ENCODE measurements at regions of chr5 and their contacts with region 1.

Region 1: GRCh38 chr5:135887351-135887864 is 8.2 kb downstream of the IL9 start:
- DNase-seq: peak; percentile 77
- H3K4me3 ChIP-seq: no peak overlapping the region
- H3K27ac ChIP-seq: no peak overlapping the region
- H3K4me1 ChIP-seq: no peaks in the 10 kb centered on the region
- H3K27me3 ChIP-seq: peaks cover 18% of the 10 kb centered on the region
- CTCF ChIP-seq: peak; percentile 87

Region 2: GRCh38 chr5:135448791-135449507 is 438.5 kb before region 1 on chr5:
- CTCF ChIA-PET with region 1: no interaction called
- POLR2A ChIA-PET with region 1: no interaction called
- intact Hi-C with region 1: no loop called
- DNase-seq: no peak
- H3K4me3 ChIP-seq: no peak overlapping the region
- H3K27ac ChIP-seq: no peak overlapping the region
- H3K4me1 ChIP-seq: no peaks in the 10 kb centered on the region
- H3K27me3 ChIP-seq: peaks cover 25% of the 10 kb centered on the region
- CTCF ChIP-seq: no peak

Region 3: GRCh38 chr5:136062366-136063274 is 175.2 kb after region 1 on chr5:
- CTCF ChIA-PET with region 1: no interaction called
- POLR2A ChIA-PET with region 1: no interaction called
- intact Hi-C with region 1: loop called (anchors 1 kb)
- DNase-seq: peak; percentile 63
- H3K4me3 ChIP-seq: no peak overlapping the region
- H3K27ac ChIP-seq: no peak overlapping the region
- H3K4me1 ChIP-seq: no peaks in the 10 kb centered on the region
- H3K27me3 ChIP-seq: no peaks in the 10 kb centered on the region
- CTCF ChIP-seq: peak; percentile 59

Region 4: GRCh38 chr5:136080483-136081216 is 193.2 kb after region 1 on chr5:
- CTCF ChIA-PET with region 1: no interaction called
- POLR2A ChIA-PET with region 1: no interaction called
- intact Hi-C with region 1: loop called (anchors 1 kb)
- DNase-seq: peak; percentile 77
- H3K4me3 ChIP-seq: peak overlapping the region; percentile 41
- H3K27ac ChIP-seq: no peak overlapping the region
- H3K4me1 ChIP-seq: no peaks in the 10 kb centered on the region
- H3K27me3 ChIP-seq: peaks cover 9% of the 10 kb centered on the region
- CTCF ChIP-seq: no peak

Region 5: DNA sequence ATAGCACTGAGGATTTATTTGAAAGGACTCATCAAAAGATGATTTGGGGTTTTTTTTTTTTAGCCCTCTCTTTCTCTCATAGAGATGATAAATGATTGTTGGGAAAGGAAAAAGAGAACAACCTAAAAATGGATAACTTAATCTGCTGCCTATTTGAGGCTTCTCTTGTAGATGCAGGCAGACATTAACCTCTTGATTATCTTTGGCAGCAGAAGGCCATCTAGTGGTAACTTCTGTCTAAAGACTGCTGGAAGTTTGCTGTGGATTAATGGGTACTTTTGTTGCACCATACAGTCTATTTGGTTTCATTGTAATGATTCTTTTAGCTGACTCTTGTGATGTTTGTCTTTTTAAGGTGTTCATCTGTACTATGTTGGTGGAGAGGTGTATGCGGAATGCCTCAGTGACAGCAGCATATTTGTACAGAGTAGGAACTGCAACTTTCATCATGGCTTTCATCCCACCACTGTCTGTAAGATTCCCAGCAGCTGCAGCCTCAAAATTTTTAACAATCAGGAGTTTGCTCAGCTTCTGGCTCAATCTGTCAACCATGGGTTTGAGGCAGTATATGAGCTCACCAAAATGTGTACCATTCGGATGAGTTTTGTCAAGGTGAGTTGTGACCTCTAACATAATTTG is 286.7 kb after region 1 on chr5:
- CTCF ChIA-PET with region 1: no interaction called
- POLR2A ChIA-PET with region 1: no interaction called
- intact Hi-C with region 1: loop called (anchors 1 kb)
- DNase-seq: peak; percentile 63
- H3K4me3 ChIP-seq: no peak overlapping the region
- H3K27ac ChIP-seq: no peak overlapping the region
- H3K4me1 ChIP-seq: no peaks in the 10 kb centered on the region
- H3K27me3 ChIP-seq: no peaks in the 10 kb centered on the region
- CTCF ChIP-seq: peak; percentile 68

Region 6: DNA sequence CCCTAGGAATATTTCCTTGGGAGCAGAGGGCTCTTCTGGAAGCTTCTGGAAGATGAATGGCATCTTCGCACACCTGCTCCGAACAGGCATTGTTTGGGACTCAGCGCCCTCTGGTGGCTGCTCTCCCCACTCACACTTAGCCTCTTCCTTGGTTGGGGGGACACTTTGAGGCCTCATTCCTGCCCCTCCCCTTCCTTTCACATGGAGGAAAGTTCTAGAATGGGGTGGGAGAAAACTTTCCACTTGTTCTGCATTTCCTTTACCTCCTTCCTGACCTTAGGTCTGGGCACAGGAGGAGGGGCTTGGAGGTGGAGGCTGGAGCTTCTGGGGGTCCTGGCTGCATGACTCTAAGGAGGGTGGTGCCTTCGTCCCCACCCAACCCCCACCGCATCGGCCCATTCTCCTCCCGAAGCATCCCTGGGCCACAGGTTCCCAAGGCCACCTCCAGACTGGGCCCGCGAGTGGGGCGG is 324.9 kb after region 1 on chr5:
- CTCF ChIA-PET with region 1: interaction called, 3 read pairs
- POLR2A ChIA-PET with region 1: no interaction called
- intact Hi-C with region 1: loop called (anchors 1 kb)
- DNase-seq: peak; percentile 50
- H3K4me3 ChIP-seq: no peak overlapping the region
- H3K27ac ChIP-seq: no peak overlapping the region
- H3K4me1 ChIP-seq: no peaks in the 10 kb centered on the region
- H3K27me3 ChIP-seq: peaks cover 12% of the 10 kb centered on the region
- CTCF ChIP-seq: peak; percentile 94

Region 7: DNA sequence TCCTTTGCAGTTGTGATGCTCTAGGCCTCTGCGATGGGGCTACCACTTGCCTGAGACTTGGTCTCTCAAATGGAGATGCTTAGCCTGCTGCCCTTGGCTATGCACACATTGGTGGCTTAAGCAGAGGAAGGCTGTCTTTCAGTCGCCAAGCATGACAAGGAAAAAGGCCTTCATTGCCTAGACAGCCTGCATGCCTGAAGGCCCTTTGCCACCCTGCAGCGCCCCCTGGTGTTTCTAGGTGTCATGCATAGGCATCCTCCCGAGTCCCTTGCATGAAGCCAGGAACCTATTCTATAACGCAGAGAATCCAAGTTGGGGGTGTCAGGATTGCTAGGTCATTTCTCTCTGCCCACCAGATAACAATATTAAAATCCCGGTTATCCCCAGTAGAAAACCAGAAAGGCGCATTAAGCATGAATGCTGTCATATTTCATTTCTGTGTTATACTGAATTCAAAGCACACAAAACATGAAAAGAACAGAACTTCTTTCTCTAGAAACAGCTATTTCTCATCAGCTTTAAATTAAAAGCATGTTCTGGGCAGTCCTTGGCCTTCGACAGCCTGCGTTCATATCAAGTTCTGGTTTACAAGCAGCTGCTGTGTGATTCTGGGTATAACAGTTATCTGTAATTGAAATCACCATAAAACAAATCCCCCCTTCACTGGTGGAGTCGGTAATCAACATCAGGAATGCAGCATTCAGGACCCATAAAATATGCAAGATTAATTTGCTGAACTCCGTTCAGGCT is 537.6 kb after region 1 on chr5:
- CTCF ChIA-PET with region 1: no interaction called
- POLR2A ChIA-PET with region 1: no interaction called
- intact Hi-C with region 1: loop called (anchors 2 kb)
- DNase-seq: peak; percentile 81
- H3K4me3 ChIP-seq: no peak overlapping the region
- H3K27ac ChIP-seq: no peak overlapping the region
- H3K4me1 ChIP-seq: no peaks in the 10 kb centered on the region
- H3K27me3 ChIP-seq: peaks cover 48% of the 10 kb centered on the region
- CTCF ChIP-seq: peak; percentile 94

Region 8: DNA sequence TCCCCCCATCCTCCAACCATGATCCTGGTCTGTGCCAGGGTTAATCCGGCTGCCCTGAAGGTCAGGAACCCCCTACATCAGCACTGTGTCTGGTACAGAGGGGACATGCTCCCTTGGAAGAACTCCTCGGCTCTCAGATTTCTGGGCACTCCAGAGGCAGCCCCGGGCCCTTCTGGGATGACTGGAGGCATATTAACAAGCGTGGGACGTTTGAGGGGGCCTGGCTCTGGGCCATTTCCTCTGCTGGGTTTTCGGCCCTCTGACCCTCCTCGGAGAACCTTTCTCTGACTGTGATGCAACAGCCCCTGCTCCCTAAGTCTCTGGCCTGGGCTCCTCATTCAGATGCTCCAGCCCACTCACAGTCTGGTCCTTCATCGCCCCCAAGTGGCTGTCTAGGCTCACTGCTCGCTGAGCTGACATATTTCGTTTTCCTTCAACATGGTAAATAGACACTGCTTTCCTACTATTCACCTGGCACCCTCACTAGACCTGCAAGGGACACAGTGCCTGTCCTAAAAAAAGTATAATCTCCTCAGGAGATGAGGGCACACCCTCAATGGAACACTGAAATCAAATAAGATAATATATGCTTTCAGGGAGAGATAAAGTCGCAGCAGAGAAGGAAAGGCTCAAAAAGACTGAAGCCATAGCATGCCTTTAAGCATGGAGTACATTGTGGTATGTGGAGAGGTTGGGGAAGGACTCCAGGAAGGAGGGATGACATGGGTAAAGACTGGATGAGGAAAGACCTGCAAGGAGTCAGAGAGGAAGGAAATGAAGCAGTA is 882.7 kb after region 1 on chr5:
- CTCF ChIA-PET with region 1: no interaction called
- POLR2A ChIA-PET with region 1: interaction called, 5 read pairs
- intact Hi-C with region 1: loop called (anchors 10 kb)
- DNase-seq: peak; percentile 73
- H3K4me3 ChIP-seq: no peak overlapping the region
- H3K27ac ChIP-seq: no peak overlapping the region
- H3K4me1 ChIP-seq: no peaks in the 10 kb centered on the region
- H3K27me3 ChIP-seq: peaks cover 30% of the 10 kb centered on the region
- CTCF ChIP-seq: peak; percentile 87